ENCODE measurements at regions of chr1 and their contacts with region 1.

Region 1: GRCh38 chr1:159132271-159132881 is 39.0 kb upstream of the CADM3 start:
- DNase-seq: peak; percentile 71
- ATAC-seq: no peak
- H3K4me3 ChIP-seq: no peak overlapping the region
- H3K4me3 Mint-ChIP-seq: no peak overlapping the region
- H3K27ac ChIP-seq: no peak overlapping the region
- H3K27ac Mint-ChIP-seq: no peak overlapping the region
- H3K4me1 ChIP-seq: no peaks in the 10 kb centered on the region
- H3K4me1 Mint-ChIP-seq: peaks cover 2% of the 10 kb centered on the region
- H3K27me3 ChIP-seq: no peaks in the 10 kb centered on the region
- H3K27me3 Mint-ChIP-seq: no peaks in the 10 kb centered on the region
- CTCF ChIP-seq: peak; percentile 90

Region 2: GRCh38 chr1:158972841-158973240 is 159.5 kb before region 1 on chr1:
- CTCF ChIA-PET with region 1: no interaction called
- POLR2A ChIA-PET with region 1: no interaction called
- intact Hi-C with region 1: no loop called
- DNase-seq: peak; percentile 24
- ATAC-seq: no peak
- H3K4me3 ChIP-seq: no peak overlapping the region
- H3K4me3 Mint-ChIP-seq: no peak overlapping the region
- H3K27ac ChIP-seq: no peak overlapping the region
- H3K27ac Mint-ChIP-seq: no peak overlapping the region
- H3K4me1 ChIP-seq: no peaks in the 10 kb centered on the region
- H3K4me1 Mint-ChIP-seq: peaks cover 2% of the 10 kb centered on the region
- H3K27me3 ChIP-seq: no peaks in the 10 kb centered on the region
- H3K27me3 Mint-ChIP-seq: no peaks in the 10 kb centered on the region
- CTCF ChIP-seq: no peak

Region 3: DNA sequence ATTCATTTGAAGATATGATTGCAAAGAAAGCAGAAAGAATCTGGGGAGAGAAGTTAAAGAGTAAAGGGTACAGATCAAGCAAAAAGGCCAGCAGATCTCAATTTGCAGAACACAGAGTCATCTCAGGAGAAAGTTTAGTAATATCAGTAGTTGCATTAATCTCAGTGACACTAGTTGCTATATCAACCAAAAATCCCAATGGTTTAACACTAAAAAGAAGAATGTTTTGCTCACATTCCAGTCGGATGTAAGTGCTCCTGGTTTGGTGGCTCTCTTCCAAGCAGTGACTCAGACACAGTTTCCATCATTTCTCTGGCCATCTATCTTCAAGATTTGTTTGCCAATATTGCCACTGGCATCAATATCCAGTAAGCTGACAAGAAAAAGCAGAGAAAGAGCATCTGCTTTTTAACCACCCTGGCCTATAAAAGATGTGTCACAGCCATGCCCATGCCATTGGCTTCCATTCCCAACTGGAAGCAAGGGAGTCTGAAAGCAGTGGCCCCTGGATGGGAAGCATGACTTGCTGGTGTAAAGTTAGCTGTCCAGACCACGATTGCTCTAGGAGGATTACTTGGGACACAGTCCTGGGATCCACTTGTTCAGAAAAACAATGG is 10.3 kb before region 1 on chr1:
- CTCF ChIA-PET with region 1: interaction called, 11 read pairs
- POLR2A ChIA-PET with region 1: no interaction called
- intact Hi-C with region 1: no loop called
- DNase-seq: no peak
- ATAC-seq: no peak
- H3K4me3 ChIP-seq: no peak overlapping the region
- H3K4me3 Mint-ChIP-seq: no peak overlapping the region
- H3K27ac ChIP-seq: no peak overlapping the region
- H3K27ac Mint-ChIP-seq: no peak overlapping the region
- H3K4me1 ChIP-seq: no peaks in the 10 kb centered on the region
- H3K4me1 Mint-ChIP-seq: no peaks in the 10 kb centered on the region
- H3K27me3 ChIP-seq: no peaks in the 10 kb centered on the region
- H3K27me3 Mint-ChIP-seq: no peaks in the 10 kb centered on the region
- CTCF ChIP-seq: no peak

Region 4: DNA sequence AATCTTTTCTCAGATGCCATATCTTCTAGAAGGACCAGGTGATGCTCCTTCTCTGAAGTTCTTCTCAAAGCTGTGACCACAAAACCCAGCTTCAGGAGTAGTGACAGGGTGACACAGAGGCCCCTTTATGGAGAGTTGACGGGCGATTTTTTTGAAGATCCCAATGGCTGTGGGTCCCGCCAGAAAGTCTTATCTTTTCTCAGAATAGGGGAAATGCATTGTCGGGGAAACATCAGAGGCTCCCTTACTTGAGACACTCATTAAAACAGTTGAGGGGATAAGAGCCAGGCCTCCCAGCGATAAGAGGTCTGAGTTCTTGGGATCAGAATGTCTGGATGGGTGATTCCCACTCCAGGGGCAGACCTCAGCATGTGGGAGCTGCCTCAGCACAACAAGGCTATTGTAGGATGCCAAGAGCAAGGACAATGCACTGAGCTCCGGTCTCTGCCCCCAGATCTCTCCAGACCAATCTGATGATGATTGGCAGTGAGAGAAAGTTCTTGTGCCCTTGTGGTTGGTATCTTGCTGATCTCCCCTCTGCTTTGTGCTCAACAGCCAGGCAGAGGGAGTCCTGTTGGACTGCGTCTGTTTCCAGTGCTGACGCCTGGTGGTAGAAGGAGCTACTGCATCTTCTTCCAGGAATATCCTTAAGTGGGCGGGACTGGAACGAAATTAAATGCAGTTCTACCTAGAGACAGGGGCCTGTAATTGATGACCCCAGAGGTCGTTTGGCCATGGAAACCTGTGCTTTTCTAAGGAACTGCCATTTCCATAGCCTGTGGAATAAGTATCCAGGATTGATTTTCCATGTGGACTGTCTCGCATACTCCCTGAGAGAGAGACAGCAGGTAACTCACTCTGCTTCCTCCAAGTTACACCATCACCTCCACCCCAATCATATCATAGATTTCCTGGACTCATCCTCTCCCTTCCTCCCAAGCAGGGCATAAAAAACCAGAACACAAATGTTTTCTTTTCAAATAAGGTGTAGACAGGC is 65.5 kb after region 1 on chr1:
- CTCF ChIA-PET with region 1: interaction called, 22 read pairs
- POLR2A ChIA-PET with region 1: no interaction called
- intact Hi-C with region 1: loop called (anchors 1 kb)
- DNase-seq: peak; percentile 75
- ATAC-seq: peak; percentile 88
- H3K4me3 ChIP-seq: no peak overlapping the region
- H3K4me3 Mint-ChIP-seq: no peak overlapping the region
- H3K27ac ChIP-seq: no peak overlapping the region
- H3K27ac Mint-ChIP-seq: no peak overlapping the region
- H3K4me1 ChIP-seq: peaks cover 0 to 4% of the 10 kb centered on the region in 2 donors
- H3K4me1 Mint-ChIP-seq: no peaks in the 10 kb centered on the region
- H3K27me3 ChIP-seq: peaks cover 0 to 25% (median 4%) of the 10 kb centered on the region in 4 experiments
- H3K27me3 Mint-ChIP-seq: peaks cover 36% of the 10 kb centered on the region
- CTCF ChIP-seq: peak; percentile 80

Measured in B cell (primary cell).